ENCODE measurements at regions of chr1 and their contacts with region 1.

Region 1: GRCh38 chr1:155227261-155228095 is 19.0 kb downstream of the MTX1 start:
- DNase-seq: peak; percentile 90
- ATAC-seq: peak; percentile 96
- H3K4me3 Mint-ChIP-seq: peak overlapping the region; percentile 88
- H3K27ac Mint-ChIP-seq: peak overlapping the region; percentile 87
- H3K4me1 Mint-ChIP-seq: peaks cover 43% of the 10 kb centered on the region
- H3K27me3 Mint-ChIP-seq: no peaks in the 10 kb centered on the region
- CTCF ChIP-seq: no peak

Region 2: GRCh38 chr1:154689070-154689469 is 538.4 kb before region 1 on chr1:
- CTCF ChIA-PET with region 1: no interaction called
- POLR2A ChIA-PET with region 1: no interaction called
- intact Hi-C with region 1: no loop called
- DNase-seq: no peak
- ATAC-seq: no peak
- H3K4me3 Mint-ChIP-seq: no peak overlapping the region
- H3K27ac Mint-ChIP-seq: no peak overlapping the region
- H3K4me1 Mint-ChIP-seq: no peaks in the 10 kb centered on the region
- H3K27me3 Mint-ChIP-seq: peaks cover 2% of the 10 kb centered on the region
- CTCF ChIP-seq: no peak

Region 3: GRCh38 chr1:155193275-155193990 is 34.0 kb before region 1 on chr1:
- CTCF ChIA-PET with region 1: interaction called, 12 read pairs
- POLR2A ChIA-PET with region 1: interaction called, 9 read pairs
- intact Hi-C with region 1: loop called (anchors 5 kb)
- DNase-seq: peak; percentile 81
- ATAC-seq: peak; percentile 73
- H3K4me3 Mint-ChIP-seq: peak overlapping the region; percentile 88
- H3K27ac Mint-ChIP-seq: peak overlapping the region; percentile 84
- H3K4me1 Mint-ChIP-seq: peaks cover 28% of the 10 kb centered on the region
- H3K27me3 Mint-ChIP-seq: no peaks in the 10 kb centered on the region
- CTCF ChIP-seq: peak; percentile 63

Region 4: DNA sequence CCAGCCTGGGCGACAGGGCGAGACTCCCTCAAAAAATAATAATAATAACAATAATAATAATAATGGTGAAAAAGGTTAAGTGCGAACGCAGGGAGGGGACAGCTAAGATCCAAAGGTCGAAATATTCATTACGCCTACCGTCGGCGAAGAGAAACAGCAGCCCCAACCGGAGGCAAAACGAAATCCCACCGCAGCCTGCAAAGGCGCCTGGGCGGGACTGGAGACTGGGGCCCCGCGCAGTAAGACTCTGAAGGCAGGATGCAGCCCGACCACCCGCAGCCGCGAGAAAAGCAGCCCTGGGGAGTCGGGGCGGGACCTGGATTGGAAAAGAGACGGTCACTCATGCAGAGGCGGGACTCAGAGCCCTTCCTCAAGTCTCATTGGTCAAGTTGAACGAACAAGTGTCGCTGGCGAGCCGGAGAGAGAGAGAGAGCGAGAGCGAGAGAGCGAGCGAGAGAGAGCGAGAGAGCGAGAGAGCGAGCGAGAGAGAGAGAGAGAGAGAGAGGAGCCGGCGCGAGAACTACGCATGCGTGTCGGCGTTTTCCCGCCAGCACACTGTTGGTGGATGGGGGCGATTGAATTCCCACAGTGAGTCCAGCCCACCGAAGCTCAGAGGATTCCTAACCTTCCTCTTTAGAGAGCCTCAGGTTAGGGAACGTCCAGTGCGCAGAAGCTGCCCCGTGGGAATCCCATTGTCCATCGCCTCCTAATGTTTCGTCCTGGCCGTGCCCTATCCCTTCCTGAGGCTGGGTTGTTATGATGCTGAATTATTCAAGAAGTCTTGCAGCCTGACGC is 17.1 kb after region 1 on chr1:
- CTCF ChIA-PET with region 1: interaction called, 5 read pairs
- POLR2A ChIA-PET with region 1: interaction called, 7 read pairs
- intact Hi-C with region 1: loop called (anchors 1 kb)
- DNase-seq: peak; percentile 87
- ATAC-seq: peak; percentile 97
- H3K4me3 Mint-ChIP-seq: peak overlapping the region; percentile 85
- H3K27ac Mint-ChIP-seq: peak overlapping the region; percentile 96
- H3K4me1 Mint-ChIP-seq: peaks cover 39% of the 10 kb centered on the region
- H3K27me3 Mint-ChIP-seq: peaks cover 2% of the 10 kb centered on the region
- CTCF ChIP-seq: no peak

Region 5: GRCh38 chr1:155261852-155262673 is 34.6 kb after region 1 on chr1 and contains the start of gene SCAMP3:
- CTCF ChIA-PET with region 1: no interaction called
- POLR2A ChIA-PET with region 1: interaction called, 5 read pairs
- intact Hi-C with region 1: loop called (anchors 1 kb)
- DNase-seq: peak; percentile 71
- ATAC-seq: peak; percentile 95
- H3K4me3 Mint-ChIP-seq: peak within 1 kb of the TSS; percentile 98
- H3K27ac Mint-ChIP-seq: peak within 1 kb of the TSS; percentile 92
- H3K4me1 Mint-ChIP-seq: peaks cover 33% of the 10 kb centered on the region
- H3K27me3 Mint-ChIP-seq: no peaks in the 10 kb centered on the region
- CTCF ChIP-seq: no peak
- total RNA-seq, gene SCAMP3: 71.8 and 78.6 TPM in 2 replicates

Region 6: GRCh38 chr1:155324611-155325528 is 97.4 kb after region 1 on chr1:
- CTCF ChIA-PET with region 1: no interaction called
- POLR2A ChIA-PET with region 1: no interaction called
- intact Hi-C with region 1: no loop called
- DNase-seq: peak; percentile 52
- ATAC-seq: no peak
- H3K4me3 Mint-ChIP-seq: peak overlapping the region; percentile 88
- H3K27ac Mint-ChIP-seq: peak overlapping the region; percentile 78
- H3K4me1 Mint-ChIP-seq: peaks cover 29% of the 10 kb centered on the region
- H3K27me3 Mint-ChIP-seq: no peaks in the 10 kb centered on the region
- CTCF ChIP-seq: no peak